HEK293 (cell line): ENCODE measurements at regions of chr1 and their contacts with region 1.

Region 1: DNA sequence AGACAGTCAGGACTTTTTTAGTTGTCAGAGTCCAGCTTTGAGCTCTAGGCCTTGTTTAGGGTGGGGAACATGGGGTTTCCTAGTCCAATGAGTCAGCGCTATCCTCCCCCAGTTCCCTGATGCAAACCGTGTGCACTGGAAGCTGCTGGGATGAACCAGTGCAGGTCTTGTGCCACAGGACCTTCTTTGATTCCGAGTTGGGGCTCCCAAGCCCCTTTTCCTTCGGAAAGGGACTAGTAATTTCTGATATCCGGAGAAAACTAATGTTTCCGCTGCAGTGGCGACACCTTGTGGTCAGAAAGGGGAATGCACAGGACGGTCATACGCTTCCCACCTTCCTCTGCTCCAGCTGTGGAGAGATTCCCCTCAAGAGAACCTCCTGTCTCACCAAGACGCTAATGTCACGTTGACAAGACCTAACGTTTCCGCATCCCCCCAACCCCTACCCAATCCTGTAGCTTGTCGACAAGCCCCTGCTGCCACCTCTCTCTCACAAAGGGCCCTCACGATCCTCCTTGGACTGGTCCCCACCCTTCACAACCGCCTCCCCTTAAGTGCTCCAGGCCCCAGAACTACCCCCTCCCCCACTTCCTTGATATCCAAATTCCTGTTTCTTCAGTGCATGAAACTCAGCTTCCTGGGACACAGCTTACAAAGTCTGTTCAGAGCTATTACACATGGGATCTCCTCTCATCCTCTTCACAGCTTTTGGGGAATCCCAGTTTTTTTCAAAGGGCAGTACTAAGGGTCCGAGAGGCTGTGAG is 30.9 kb downstream of the GPA33 start:
- H3K4me3 ChIP-seq: no peak overlapping the region
- H3K27ac ChIP-seq: no peak overlapping the region
- H3K4me1 ChIP-seq: no peaks in the 10 kb centered on the region
- CTCF ChIP-seq: peak; percentile 81

Region 2: GRCh38 chr1:166875734-166876539 is 183.3 kb before region 1 on chr1 and contains the start of gene TADA1:
- CTCF ChIA-PET with region 1: interaction called, 18 read pairs
- POLR2A ChIA-PET with region 1: no interaction called
- H3K4me3 ChIP-seq: peak within 1 kb of the TSS; percentile 81
- H3K27ac ChIP-seq: peak within 1 kb of the TSS; percentile 79
- H3K4me1 ChIP-seq: no peaks in the 10 kb centered on the region
- CTCF ChIP-seq: peak; percentile 66; the same call in 1 of the 2 replicates

Region 3: GRCh38 chr1:166895793-166896192 is 163.4 kb before region 1 on chr1:
- CTCF ChIA-PET with region 1: interaction called, 14 read pairs
- POLR2A ChIA-PET with region 1: no interaction called
- H3K4me3 ChIP-seq: no peak overlapping the region
- H3K27ac ChIP-seq: no peak overlapping the region
- H3K4me1 ChIP-seq: no peaks in the 10 kb centered on the region
- CTCF ChIP-seq: no peak

Region 4: GRCh38 chr1:166910396-166910994 is 148.7 kb before region 1 on chr1:
- CTCF ChIA-PET with region 1: interaction called, 702 read pairs
- POLR2A ChIA-PET with region 1: interaction called, 8 read pairs
- H3K4me3 ChIP-seq: no peak overlapping the region
- H3K27ac ChIP-seq: no peak overlapping the region
- H3K4me1 ChIP-seq: no peaks in the 10 kb centered on the region
- CTCF ChIP-seq: peak; percentile 48; the same call in 1 of the 2 replicates

Region 5: GRCh38 chr1:166947398-166948043 is 111.7 kb before region 1 on chr1:
- CTCF ChIA-PET with region 1: interaction called, 12 read pairs
- POLR2A ChIA-PET with region 1: no interaction called
- H3K4me3 ChIP-seq: peak overlapping the region; percentile 30
- H3K27ac ChIP-seq: no peak overlapping the region
- H3K4me1 ChIP-seq: 0 out of 2 replicates have a peak, but pooled peaks cover 6% of the 10 kb centered on the region
- CTCF ChIP-seq: no peak